ENCODE measurements at regions of chr22 and their contacts with region 1.

Region 1: DNA sequence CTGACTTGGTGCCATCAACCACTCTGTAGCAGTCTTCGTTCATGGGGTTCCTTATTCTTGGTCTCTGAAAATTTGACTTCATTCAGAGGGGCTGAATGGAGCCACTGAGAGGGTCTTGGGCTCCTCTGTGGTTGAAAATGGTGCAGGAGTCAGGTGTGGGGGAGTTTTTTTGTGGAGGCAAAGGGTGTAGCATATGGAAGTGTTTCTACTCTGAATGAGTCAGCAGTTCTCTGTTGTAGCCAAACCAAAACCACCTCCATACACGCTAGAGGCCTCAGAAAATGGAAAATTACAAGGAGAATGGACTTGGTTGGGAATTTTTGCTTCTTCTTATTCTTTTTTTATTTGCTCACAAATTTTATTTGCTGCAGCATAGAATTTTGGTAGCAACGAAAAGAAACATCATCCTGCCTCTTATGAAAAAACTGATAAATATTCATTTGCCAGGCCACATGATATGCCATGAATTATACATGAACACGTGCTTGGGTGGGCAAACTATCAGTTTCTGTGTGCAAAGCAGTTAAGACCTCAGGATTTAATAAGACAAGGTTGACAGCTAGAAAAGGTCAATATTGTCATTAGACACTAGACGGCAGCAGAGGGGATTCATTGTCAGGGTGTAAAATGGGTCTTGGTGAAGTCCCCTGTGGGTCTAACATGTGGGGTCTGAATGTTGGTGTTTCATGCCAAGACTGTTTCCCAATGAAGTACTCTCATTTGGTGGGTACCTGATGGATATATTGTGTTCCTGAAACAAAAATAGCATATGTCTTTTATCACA is 111.7 kb downstream of the MYO18B start:
- DNase-seq: no peak
- H3K4me3 ChIP-seq: no peak overlapping the region
- H3K27ac ChIP-seq: no peak overlapping the region
- H3K4me1 ChIP-seq: no peaks in the 10 kb centered on the region
- H3K27me3 ChIP-seq: no peaks in the 10 kb centered on the region
- CTCF ChIP-seq: no peak

Region 2: GRCh38 chr22:26550498-26551033 is 696.9 kb after region 1 on chr22:
- intact Hi-C with region 1: loop called (anchors 10 kb)
- DNase-seq: no peak
- H3K4me3 ChIP-seq: no peak overlapping the region
- H3K27ac ChIP-seq: no peak overlapping the region
- H3K4me1 ChIP-seq: no peaks in the 10 kb centered on the region
- H3K27me3 ChIP-seq: no peaks in the 10 kb centered on the region
- CTCF ChIP-seq: no peak

Measured in colonic mucosa (tissue), 4 donors.